ENCODE measurements at regions of chr4 and their contacts with region 1.

Region 1: GRCh38 chr4:169619959-169620879 is at the start of gene CLCN3:
- DNase-seq: peak; percentile 97
- H3K4me3 Mint-ChIP-seq: peak within 1 kb of the TSS; percentile 100
- H3K27ac Mint-ChIP-seq: peak within 1 kb of the TSS; percentile 99
- H3K4me1 Mint-ChIP-seq: peaks cover 50% of the 10 kb centered on the region
- H3K27me3 Mint-ChIP-seq: no peaks in the 10 kb centered on the region
- total RNA-seq, gene CLCN3: 26.6 and 28.1 TPM in 2 replicates

Region 2: DNA sequence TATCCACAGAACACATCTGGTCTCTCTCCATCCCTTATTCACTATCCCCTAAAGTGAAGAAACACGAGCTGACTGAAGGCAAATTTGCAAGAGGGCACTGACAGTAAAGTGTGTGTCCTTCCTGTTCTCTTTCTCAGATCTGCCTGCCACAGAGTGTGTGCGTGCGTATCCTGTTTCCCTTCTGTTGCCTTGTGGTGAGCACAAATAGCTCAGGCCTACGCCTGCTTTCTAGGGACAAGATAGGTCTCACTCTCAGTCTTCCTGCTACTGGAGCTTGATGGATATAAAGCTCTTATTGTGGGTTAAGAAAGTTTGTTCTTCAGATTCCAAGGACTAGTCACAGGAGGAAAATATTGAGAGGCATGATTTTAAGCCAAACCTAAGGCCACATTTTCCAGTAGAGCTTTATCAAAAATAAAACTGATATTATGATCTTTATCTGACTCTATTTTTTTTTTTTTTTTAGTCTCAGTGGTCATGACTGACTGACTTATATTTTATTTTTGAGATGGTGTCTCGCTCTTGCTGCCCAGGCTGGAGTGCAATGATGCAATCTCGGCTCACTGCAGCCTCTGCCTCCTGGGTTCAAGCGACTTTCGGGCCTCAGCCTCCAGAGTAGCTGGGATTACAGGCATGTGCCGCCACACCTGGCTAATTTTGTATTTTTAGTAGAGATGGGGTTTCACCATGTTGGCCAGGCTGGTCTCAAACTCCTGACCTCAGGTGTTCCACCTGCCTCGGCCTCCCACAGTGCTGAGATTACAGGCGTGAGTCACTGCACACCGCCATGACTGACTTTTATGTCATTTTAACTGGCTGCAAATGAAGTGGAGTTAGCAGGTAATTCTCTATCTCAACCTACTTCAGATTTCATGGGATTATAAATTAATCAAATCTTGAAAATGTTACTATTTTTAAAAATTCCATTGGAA is 209.1 kb before region 1 on chr4:
- intact Hi-C with region 1: loop called (anchors 10 kb)
- DNase-seq: peak; percentile 89
- H3K4me3 Mint-ChIP-seq: peak overlapping the region; percentile 34
- H3K27ac Mint-ChIP-seq: peak overlapping the region; percentile 60
- H3K4me1 Mint-ChIP-seq: peaks cover 34% of the 10 kb centered on the region
- H3K27me3 Mint-ChIP-seq: no peaks in the 10 kb centered on the region

Region 3: DNA sequence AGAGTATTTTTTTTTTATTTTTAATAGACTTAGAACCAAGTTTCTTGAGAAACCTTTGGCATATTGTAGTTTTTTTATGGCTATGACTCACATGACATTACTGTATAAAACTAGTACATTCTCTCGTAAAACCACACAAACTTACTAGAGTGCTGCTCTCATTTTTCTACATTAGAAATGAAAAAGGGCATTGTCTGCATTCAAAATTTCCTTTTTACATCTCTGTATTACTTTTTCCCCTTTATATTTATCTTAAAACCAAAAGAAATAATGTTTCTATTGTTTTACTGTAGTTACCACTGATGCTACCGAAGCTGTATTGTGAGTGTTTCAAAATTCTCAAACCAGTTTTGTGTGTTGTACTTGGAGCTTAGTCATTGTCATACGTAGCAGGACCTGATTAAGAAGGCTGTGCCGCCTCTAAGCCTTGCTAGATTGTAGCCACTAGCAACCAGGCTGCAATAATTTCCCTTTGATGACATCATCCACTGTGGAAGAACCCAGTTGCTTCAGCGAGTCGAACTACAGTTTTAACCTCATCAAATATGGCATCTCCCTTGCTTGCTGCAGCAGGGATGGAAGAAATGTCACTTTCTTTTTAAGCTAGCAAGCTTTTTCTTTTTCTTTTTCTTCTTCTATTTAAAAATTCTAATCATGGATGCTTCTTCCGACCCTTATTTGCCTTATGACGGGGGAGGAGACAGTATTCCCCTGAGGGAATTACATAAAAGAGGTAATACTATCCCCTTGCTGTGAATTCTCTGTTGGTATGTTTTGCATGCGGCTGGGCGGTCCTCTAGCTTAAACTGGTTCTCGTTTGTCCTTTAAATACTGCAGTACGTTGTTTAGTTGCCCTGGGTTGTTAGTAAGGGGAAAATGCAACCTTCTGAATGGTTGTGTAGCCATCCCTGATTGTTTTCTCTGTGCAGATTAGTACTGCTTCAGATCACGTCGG is 39.8 kb after region 1 on chr4:
- intact Hi-C with region 1: loop called (anchors 1 kb)
- DNase-seq: peak; percentile 92
- H3K4me3 Mint-ChIP-seq: peak overlapping the region; percentile 88
- H3K27ac Mint-ChIP-seq: peak overlapping the region; percentile 96
- H3K4me1 Mint-ChIP-seq: peaks cover 16% of the 10 kb centered on the region
- H3K27me3 Mint-ChIP-seq: no peaks in the 10 kb centered on the region

Region 4: DNA sequence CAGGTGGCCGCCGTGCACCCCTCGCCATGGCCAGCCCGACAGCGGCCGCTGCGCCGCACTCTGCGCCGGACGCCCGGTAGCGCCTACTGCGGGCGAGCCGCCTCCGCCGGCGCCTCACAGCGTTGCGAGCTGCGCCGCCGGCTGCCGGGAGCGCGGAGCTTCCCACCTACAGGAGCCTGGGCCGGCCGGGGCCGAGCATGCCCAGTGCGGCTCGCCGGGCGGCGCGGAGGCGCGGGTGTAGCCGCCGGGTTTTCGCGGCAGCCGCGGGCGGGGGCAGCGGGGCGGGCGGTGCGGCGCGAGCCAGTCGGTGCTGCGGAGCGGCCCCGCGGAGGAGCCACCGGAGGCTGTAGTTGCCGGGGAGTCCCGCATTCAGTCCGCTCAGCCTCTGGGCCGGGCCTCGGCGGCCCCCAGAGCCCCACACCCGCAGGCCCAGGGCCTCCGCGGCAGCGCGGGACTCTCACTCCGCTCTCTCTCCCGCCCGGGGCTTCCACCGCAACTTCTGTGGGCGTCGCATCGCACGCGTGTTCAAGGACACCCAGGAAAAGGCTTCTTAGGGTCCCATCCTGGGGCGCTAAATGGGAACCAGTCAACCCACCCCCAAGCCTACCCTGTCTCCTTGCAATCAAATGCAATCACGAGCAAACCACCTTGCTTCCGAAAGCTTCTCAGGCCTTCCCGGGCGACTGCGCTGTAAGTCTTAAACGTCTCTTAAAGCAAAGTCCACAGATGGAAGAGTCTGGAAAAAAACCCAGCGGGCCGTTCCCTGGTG is 406.2 kb after region 1 on chr4 and contains the start of gene MFAP3L:
- intact Hi-C with region 1: no loop called
- DNase-seq: peak; percentile 95
- H3K4me3 Mint-ChIP-seq: peak within 1 kb of the TSS; percentile 89
- H3K27ac Mint-ChIP-seq: peak within 1 kb of the TSS; percentile 76
- H3K4me1 Mint-ChIP-seq: peaks cover 10% of the 10 kb centered on the region
- H3K27me3 Mint-ChIP-seq: peaks cover 66% of the 10 kb centered on the region
- total RNA-seq, gene MFAP3L: 0.12 and 1.1 TPM in 2 replicates

Region 5: DNA sequence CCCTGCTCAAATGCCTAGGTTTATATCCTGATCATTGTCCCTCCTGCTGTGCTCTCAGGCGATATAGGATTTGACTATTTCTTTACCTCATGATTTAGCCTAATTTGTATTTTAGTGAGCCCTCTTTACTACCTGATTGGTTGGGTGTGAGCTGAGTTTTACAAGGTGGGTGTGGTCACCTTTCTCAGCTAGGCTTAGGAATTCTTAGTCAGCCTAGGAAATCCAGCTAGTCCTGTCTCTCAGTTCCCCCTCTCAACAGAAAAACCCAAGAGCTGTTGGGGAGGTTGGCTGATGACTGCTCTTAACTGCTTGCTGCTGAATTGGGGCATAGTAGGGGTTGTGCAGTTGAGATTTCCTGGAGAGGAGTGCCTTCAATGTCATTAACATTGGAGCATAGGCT is 570.0 kb after region 1 on chr4:
- intact Hi-C with region 1: no loop called
- DNase-seq: no peak
- H3K4me3 Mint-ChIP-seq: no peak overlapping the region
- H3K27ac Mint-ChIP-seq: no peak overlapping the region
- H3K4me1 Mint-ChIP-seq: no peaks in the 10 kb centered on the region
- H3K27me3 Mint-ChIP-seq: no peaks in the 10 kb centered on the region

Measured in activated CD4-positive, alpha-beta T cell treated with anti-CD3 and anti-CD28 coated beads, Interleukin-2, amount 10 ng/mL, durations not matched to agents 24 days and 14 days (primary cell).